ENCODE measurements at regions of chr14 and their contacts with region 1.

Region 1: GRCh38 chr14:54440873-54441868 is at the start of gene CNIH1:
- DNase-seq: peak; percentile 88 to 95 (median 92)
- H3K4me3 ChIP-seq: peak within 1 kb of the TSS; percentile 80
- H3K27ac ChIP-seq: peak within 1 kb of the TSS; percentile 84 to 97
- H3K4me1 ChIP-seq: peaks cover 10% of the 10 kb centered on the region
- H3K27me3 ChIP-seq: no peaks in the 10 kb centered on the region
- CTCF ChIP-seq: peak; percentile 85 to 99 (median 95)
- EP300 ChIP-seq: no peak
- POLR2A ChIP-seq: no peak
- total RNA-seq, gene CNIH1: 53.5 to 101 (median 63.3) TPM

Region 2: GRCh38 chr14:53696217-53696965 is 744.8 kb before region 1 on chr14:
- intact Hi-C with region 1: no loop called
- DNase-seq: no peak
- H3K4me3 ChIP-seq: no peak overlapping the region
- H3K27ac ChIP-seq: no peak overlapping the region
- H3K4me1 ChIP-seq: no peaks in the 10 kb centered on the region
- H3K27me3 ChIP-seq: no peaks in the 10 kb centered on the region
- CTCF ChIP-seq: no peak
- EP300 ChIP-seq: no peak
- POLR2A ChIP-seq: no peak

Region 3: DNA sequence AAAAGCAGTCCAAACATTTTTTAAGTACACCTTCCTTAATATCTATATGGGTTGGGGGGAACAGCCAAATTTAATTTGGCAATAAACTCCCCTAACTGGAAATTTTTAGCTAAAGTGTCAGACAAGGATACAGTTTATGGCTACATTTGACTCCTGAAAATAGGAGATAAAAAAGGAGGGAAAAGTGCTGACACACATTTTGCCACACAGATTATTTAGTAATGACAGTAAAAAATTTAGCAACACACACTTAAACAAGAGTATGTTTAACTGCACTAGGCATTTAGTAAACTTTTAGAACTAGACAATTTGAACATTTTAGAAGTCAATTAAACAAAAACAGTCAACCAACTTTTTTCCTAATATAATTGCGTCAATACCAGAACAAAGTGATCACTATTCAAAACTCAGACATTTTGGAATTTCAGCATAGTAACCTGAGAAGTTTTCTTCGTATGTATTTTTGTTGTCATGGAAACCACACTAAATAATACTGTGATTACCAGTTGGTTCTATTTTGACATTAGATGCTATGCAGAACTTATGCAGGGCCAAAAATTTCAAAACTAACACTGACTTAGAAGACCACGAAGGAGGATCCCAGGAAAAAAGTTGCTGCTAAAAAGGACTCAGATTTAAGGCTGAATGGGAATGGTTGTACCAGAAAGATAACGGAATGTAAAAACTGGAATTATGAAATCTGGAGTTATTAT is 34.2 kb after region 1 on chr14:
- intact Hi-C with region 1: no loop called
- DNase-seq: no peak
- H3K4me3 ChIP-seq: no peak overlapping the region
- H3K27ac ChIP-seq: no peak overlapping the region
- H3K4me1 ChIP-seq: peaks cover 10% of the 10 kb centered on the region
- H3K27me3 ChIP-seq: no peaks in the 10 kb centered on the region
- CTCF ChIP-seq: no peak
- EP300 ChIP-seq: no peak
- POLR2A ChIP-seq: no peak

Region 4: DNA sequence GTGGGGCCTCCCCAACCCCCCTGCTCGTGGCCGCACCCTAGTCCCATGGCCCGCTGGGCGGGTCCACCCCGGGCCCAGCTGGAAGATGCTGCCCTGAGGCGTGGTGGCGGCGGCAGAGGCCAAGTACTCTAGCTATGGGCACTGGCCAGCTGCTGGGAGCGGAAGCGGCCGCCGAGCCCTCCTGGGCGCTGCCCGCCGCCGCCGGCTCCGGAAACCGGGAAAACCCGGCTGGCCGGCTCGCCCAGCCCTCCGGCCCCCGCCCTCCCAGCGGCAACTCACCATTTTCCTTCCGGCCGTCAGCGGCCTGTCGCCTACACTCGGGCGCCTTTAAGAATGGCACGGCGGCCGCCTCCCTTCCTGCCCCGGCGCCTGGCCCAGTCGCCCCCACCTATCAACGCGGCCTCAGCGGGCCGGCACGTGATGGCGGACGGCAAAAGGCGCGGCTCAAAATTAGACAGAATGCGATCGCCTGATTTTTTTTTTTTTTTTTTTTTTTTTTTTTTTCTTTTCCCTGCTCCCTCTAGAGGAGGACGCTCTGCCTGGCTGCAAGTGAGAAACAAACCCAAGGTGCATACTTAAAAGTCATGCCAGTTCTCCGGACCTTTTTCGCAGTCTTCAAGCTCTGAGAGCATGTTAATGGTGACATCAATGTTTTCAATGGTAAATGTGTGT is 47.6 kb after region 1 on chr14 and contains the start of gene GMFB:
- intact Hi-C with region 1: loop called in 1 of 4 experiments (anchors 1 kb)
- DNase-seq: peak; percentile 89 to 95 (median 92)
- H3K4me3 ChIP-seq: peak within 1 kb of the TSS; percentile 93
- H3K27ac ChIP-seq: peak within 1 kb of the TSS; percentile 81 to 89
- H3K4me1 ChIP-seq: peaks cover 9% of the 10 kb centered on the region
- H3K27me3 ChIP-seq: no peaks in the 10 kb centered on the region
- CTCF ChIP-seq: peak in 1 of 3 donors; percentile 29
- EP300 ChIP-seq: no peak
- POLR2A ChIP-seq: peak; percentile 70
- total RNA-seq, gene GMFB: 29.3 to 65.5 (median 33.8) TPM

Measured in ovary (tissue), 10 donors.